A673 (cell line): ENCODE measurements at regions of chr4 and their contacts with region 1.

Region 1: DNA sequence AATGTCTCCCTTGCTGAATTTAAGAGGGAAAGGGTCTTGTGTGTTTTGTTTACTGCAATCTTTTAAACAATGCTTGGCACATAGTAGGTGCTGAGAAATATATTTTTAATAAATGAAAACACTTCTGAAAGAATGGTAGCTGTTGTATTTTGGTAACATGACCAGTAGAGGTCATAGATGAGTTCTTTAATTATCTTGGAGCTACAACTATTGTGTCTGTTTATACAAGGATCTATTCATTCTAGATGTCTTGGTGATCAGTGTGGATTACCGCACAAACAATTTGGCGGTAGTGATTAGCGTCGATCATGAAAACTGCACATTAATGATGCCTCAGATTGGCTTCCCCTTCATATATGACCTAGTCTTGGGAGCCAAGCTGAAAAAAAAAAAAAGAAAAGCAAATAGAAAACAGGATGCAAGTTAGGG is 21.4 kb upstream of the SCRG1 start:
- DNase-seq: peak; percentile 61
- H3K4me3 ChIP-seq: no peak overlapping the region
- H3K27ac ChIP-seq: no peak overlapping the region
- H3K4me1 ChIP-seq: peaks cover 18% of the 10 kb centered on the region
- H3K27me3 ChIP-seq: no peaks in the 10 kb centered on the region
- CTCF ChIP-seq: peak; percentile 68

Region 2: DNA sequence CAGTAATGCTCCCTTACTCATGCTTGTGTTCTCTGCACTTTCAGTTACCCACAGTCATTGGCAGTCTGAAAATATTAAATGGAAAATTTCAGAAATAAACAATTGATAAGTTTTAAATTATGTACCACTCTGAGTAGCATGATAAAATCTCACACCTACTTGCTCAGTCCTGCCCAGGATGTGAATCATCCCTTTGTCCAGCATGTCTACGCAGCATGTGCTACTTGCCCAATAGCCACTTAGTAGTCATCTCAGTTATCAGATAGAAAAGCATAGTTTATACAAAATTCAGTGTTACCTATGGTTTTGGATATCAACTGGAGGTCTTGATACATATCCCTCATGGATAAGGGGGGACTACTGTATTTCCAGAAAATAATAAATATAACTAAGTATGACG is 1030.0 kb before region 1 on chr4:
- CTCF ChIA-PET with region 1: no interaction called
- POLR2A ChIA-PET with region 1: no interaction called
- intact Hi-C with region 1: no loop called
- DNase-seq: no peak
- H3K4me3 ChIP-seq: no peak overlapping the region
- H3K27ac ChIP-seq: no peak overlapping the region
- H3K4me1 ChIP-seq: no peaks in the 10 kb centered on the region
- H3K27me3 ChIP-seq: no peaks in the 10 kb centered on the region
- CTCF ChIP-seq: no peak

Region 3: GRCh38 chr4:173159791-173160190 is 260.5 kb before region 1 on chr4:
- CTCF ChIA-PET with region 1: interaction called, 10 read pairs
- POLR2A ChIA-PET with region 1: no interaction called
- intact Hi-C with region 1: no loop called
- DNase-seq: no peak
- H3K4me3 ChIP-seq: no peak overlapping the region
- H3K27ac ChIP-seq: no peak overlapping the region
- H3K4me1 ChIP-seq: no peaks in the 10 kb centered on the region
- H3K27me3 ChIP-seq: no peaks in the 10 kb centered on the region
- CTCF ChIP-seq: no peak

Region 4: DNA sequence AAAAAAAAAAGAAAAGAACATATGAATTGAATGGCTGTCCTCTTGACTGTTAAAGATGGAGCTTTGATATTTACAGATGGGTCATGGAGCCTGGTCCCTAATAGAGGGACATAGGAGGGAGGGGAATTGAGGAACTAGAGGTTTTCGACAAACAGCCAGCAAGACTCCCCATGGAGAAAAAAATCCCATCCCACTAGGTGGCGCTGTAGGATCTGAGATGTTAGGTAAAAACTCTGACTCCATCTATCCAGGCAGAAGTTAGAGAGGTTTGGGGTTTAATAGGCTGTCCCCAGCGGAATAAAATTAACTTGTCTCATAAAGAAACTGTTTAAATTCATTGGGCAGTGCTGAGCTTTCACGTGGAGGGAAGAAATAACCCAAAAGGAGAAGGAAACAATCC is 132.0 kb before region 1 on chr4:
- CTCF ChIA-PET with region 1: no interaction called
- POLR2A ChIA-PET with region 1: no interaction called
- intact Hi-C with region 1: loop called (anchors 10 kb)
- DNase-seq: peak; percentile 80
- H3K4me3 ChIP-seq: no peak overlapping the region
- H3K27ac ChIP-seq: no peak overlapping the region
- H3K4me1 ChIP-seq: no peaks in the 10 kb centered on the region
- H3K27me3 ChIP-seq: no peaks in the 10 kb centered on the region
- CTCF ChIP-seq: peak; percentile 68

Region 5: DNA sequence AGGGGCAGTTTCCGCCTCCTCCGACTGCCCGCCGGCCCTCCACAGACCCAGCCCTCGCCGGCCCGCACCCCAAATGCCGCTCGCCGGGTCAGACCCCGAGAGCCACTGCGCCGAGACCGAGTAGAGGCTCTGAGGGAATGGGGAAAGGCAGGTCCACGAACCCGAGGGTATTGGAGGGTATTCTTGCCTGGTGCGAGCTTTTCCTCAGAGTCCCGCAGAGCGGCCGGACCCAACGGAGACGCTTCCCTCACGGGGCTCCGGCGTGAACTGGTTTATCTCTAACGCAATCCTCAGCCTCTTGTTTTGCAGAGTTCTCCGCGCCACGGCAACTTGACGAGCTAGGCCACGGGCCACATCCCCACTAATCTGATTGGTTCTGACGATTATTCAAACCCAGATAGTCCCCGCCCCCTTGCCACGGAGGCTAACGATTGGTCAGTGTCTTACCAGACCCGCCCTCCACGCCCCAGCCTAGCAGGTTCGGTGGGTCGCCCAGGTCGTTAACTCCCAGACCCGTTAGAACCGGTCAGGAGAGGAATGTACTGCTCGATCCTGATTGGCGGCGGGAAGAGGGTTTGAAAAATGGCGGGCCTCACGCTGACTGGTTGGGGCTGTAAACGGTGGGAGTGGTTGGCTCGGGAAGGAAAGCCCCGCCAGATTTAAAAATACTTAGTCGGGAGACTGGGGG is 86.1 kb before region 1 on chr4 and contains the start of gene HMGB2:
- CTCF ChIA-PET with region 1: interaction called, 3 read pairs
- POLR2A ChIA-PET with region 1: no interaction called
- intact Hi-C with region 1: loop called (anchors 1 kb)
- DNase-seq: peak; percentile 100
- H3K4me3 ChIP-seq: peak within 1 kb of the TSS; percentile 93
- H3K27ac ChIP-seq: peak within 1 kb of the TSS; percentile 99
- H3K4me1 ChIP-seq: peaks cover 32% of the 10 kb centered on the region
- H3K27me3 ChIP-seq: no peaks in the 10 kb centered on the region
- CTCF ChIP-seq: no peak
- total RNA-seq, gene HMGB2: 392 and 435 TPM in 2 replicates

Region 6: DNA sequence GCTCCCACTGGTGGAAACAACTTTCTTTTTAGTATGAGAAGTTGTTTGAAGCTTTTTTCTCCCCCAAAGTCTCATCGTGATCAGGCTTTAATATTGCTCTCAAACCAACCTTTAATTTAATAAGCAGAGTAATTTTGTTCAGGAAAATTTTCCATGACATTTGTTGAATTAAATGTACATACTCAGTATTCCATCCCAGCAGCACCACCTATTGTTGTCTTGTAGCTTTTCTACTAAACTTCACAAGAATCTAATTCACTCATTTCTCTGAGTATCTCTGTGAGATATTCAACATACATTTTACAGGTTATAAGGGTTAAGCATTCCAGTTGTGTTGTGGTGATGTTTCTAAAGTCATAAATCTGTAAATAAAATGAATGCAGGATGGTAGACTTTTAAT is 328.0 kb after region 1 on chr4:
- CTCF ChIA-PET with region 1: interaction called, 4 read pairs
- POLR2A ChIA-PET with region 1: no interaction called
- intact Hi-C with region 1: loop called (anchors 2 kb)
- DNase-seq: peak; percentile 61
- H3K4me3 ChIP-seq: no peak overlapping the region
- H3K27ac ChIP-seq: no peak overlapping the region
- H3K4me1 ChIP-seq: peaks cover 30% of the 10 kb centered on the region
- H3K27me3 ChIP-seq: no peaks in the 10 kb centered on the region
- CTCF ChIP-seq: peak; percentile 53

Region 7: GRCh38 chr4:174156239-174156826 is 736.0 kb after region 1 on chr4:
- CTCF ChIA-PET with region 1: no interaction called
- POLR2A ChIA-PET with region 1: no interaction called
- intact Hi-C with region 1: loop called (anchors 5 kb)
- DNase-seq: peak; percentile 87
- H3K4me3 ChIP-seq: peak overlapping the region; percentile 17
- H3K27ac ChIP-seq: no peak overlapping the region
- H3K4me1 ChIP-seq: peaks cover 53% of the 10 kb centered on the region
- H3K27me3 ChIP-seq: no peaks in the 10 kb centered on the region
- CTCF ChIP-seq: peak; percentile 83